IMR-90 (cell line): ENCODE measurements at regions of chr6 and their contacts with region 1.

Region 1: DNA sequence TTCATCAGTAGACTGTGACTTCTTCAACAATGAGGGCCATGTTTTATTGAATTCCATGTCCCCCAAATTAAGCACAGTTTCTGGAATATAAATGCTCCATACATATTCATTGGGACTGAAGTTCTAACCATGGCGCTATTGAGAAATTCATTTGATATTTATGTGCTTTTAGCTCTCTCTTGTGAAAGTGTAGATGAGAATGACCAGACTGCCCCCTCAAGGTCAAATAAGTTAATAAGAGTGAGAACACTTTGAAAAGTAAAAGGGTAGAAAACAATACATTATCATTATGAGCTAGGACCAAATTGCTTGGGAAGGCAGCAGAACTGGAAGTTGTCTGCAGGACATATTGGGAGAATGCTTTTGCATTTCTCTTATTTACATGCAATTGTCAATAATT is 597.9 kb downstream of the EPM2A start:
- DNase-seq: peak; percentile 38
- ATAC-seq: peak; percentile 35; the same call in 1 of the 2 replicates
- H3K4me3 ChIP-seq: no peak overlapping the region
- H3K27ac ChIP-seq: no peak overlapping the region
- H3K4me1 ChIP-seq: 0 out of 2 replicates have a peak, but pooled peaks cover 1% of the 10 kb centered on the region
- H3K27me3 ChIP-seq: no peaks in the 10 kb centered on the region
- CTCF ChIP-seq: peak; percentile 43
- POLR2A ChIP-seq: no peak
- RAD21 ChIP-seq: peak; percentile 53

Region 2: GRCh38 chr6:144939921-144940320 is 197.5 kb before region 1 on chr6:
- CTCF ChIA-PET with region 1: no interaction called
- POLR2A ChIA-PET with region 1: no interaction called
- dilution Hi-C with region 1: no loop called
- in situ Hi-C with region 1: no loop called
- intact Hi-C with region 1: loop called (anchors 5 kb)
- DNase-seq: peak; percentile 54
- ATAC-seq: peak; percentile 74; the same call in 1 of the 2 replicates
- H3K4me3 ChIP-seq: no peak overlapping the region
- H3K27ac ChIP-seq: no peak overlapping the region
- H3K4me1 ChIP-seq: peaks cover 1% of the 10 kb centered on the region; the same call in 1 of the 2 replicates
- H3K27me3 ChIP-seq: no peaks in the 10 kb centered on the region
- CTCF ChIP-seq: no peak
- POLR2A ChIP-seq: no peak
- RAD21 ChIP-seq: no peak

Region 3: GRCh38 chr6:145904868-145905267 is 767.4 kb after region 1 on chr6:
- CTCF ChIA-PET with region 1: no interaction called
- POLR2A ChIA-PET with region 1: interaction called, 11 read pairs
- dilution Hi-C with region 1: no loop called
- in situ Hi-C with region 1: no loop called
- intact Hi-C with region 1: no loop called
- DNase-seq: no peak
- ATAC-seq: no peak
- H3K4me3 ChIP-seq: no peak overlapping the region
- H3K27ac ChIP-seq: peak overlapping the region; percentile 25; the same call in 1 of the 2 replicates
- H3K4me1 ChIP-seq: peaks cover 3% of the 10 kb centered on the region
- H3K27me3 ChIP-seq: no peaks in the 10 kb centered on the region
- CTCF ChIP-seq: no peak
- POLR2A ChIP-seq: no peak
- RAD21 ChIP-seq: no peak

Region 4: GRCh38 chr6:146498309-146498708 is 1360.9 kb after region 1 on chr6:
- CTCF ChIA-PET with region 1: no interaction called
- POLR2A ChIA-PET with region 1: interaction called, 13 read pairs
- dilution Hi-C with region 1: no loop called
- in situ Hi-C with region 1: no loop called
- intact Hi-C with region 1: no loop called
- DNase-seq: no peak
- ATAC-seq: no peak
- H3K4me3 ChIP-seq: no peak overlapping the region
- H3K27ac ChIP-seq: no peak overlapping the region
- H3K4me1 ChIP-seq: no peaks in the 10 kb centered on the region
- H3K27me3 ChIP-seq: no peaks in the 10 kb centered on the region
- CTCF ChIP-seq: no peak
- POLR2A ChIP-seq: no peak
- RAD21 ChIP-seq: no peak